H1 (cell line): ENCODE measurements at regions of chr7 and their contacts with region 1.

Region 1: DNA sequence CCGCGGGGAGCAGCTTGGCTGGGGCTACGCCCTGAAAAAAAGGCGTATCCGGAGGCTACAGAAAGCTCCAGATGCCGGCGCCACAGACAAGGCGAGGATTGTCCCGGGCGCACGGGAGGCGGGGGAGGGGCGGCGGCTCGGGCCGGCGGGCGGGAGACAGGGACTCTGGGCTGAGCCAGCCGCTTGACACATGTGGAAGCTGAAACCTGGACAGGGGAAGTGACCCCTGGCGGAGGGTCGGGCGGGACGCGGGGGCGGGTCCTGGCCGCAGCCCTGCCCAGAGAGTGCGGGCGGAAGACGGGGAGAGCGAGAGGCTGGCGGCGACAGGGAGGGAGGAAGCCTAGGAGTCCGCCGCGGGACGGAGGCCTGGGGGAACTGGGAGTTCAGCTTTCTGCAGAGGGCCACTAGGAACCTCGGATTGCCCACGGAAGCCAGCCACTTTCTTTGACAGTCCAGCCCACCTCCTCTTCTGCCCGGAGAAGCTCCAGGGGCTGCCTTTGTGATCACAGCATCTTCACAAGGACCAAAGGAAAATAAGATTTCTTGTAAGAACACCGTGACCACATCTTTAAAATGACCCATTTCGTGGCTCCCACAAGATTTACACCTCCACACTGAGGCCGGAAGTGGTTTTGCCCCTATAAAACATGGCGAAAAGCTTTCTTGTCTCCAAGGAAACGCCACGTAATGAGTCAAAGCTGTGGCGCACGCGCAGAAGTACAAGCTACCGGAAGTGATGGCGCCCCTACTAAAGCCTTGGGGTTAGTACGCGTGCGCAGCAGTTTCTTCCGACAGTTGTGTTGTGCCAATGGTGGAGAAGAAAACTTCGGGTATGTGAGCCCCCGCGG is at the starts of genes PLOD3 and ZNHIT1:
- DNase-seq: peak; percentile 83 to 95
- H3K4me3 ChIP-seq: peak within 1 kb of the TSS; percentile 74 to 83 (median 78)
- H3K27ac ChIP-seq: peak within 1 kb of the TSS; percentile 37; the same call in 1 of the 2 replicates
- H3K4me1 ChIP-seq: peaks cover 0 to 13% (median 7%) of the 10 kb centered on the region in 4 experiments; a peak in 5 of 7 replicates
- H3K27me3 ChIP-seq: no peaks in the 10 kb centered on the region
- CTCF ChIP-seq: peak; percentile 27 to 34 (median 28)
- EP300 ChIP-seq: no peak
- POLR2A ChIP-seq: peak in 1 of 2 experiments; percentile 57; a peak in 2 of 3 replicates
- RAD21 ChIP-seq: peak in 1 of 2 experiments; percentile 28; a peak in 3 of 4 replicates
- total RNA-seq, gene PLOD3: 43.1 and 47.2 TPM in 2 replicates
- total RNA-seq, gene ZNHIT1: 59.9 and 61.7 TPM in 2 replicates

Region 2: GRCh38 chr7:101195884-101196283 is 21.7 kb before region 1 on chr7:
- CTCF ChIA-PET with region 1: interaction called, 54 read pairs
- POLR2A ChIA-PET with region 1: interaction called, 6 read pairs
- DNase-seq: no peak
- H3K4me3 ChIP-seq: no peak overlapping the region
- H3K27ac ChIP-seq: no peak overlapping the region
- H3K4me1 ChIP-seq: peaks cover 0 to 11% (median 7%) of the 10 kb centered on the region in 4 experiments; a peak in 6 of 7 replicates
- H3K27me3 ChIP-seq: peaks cover 0 to 2% (median 0%) of the 10 kb centered on the region in 4 experiments; a peak in 1 of 7 replicates
- CTCF ChIP-seq: no peak
- EP300 ChIP-seq: no peak
- POLR2A ChIP-seq: no peak
- RAD21 ChIP-seq: no peak

Region 3: DNA sequence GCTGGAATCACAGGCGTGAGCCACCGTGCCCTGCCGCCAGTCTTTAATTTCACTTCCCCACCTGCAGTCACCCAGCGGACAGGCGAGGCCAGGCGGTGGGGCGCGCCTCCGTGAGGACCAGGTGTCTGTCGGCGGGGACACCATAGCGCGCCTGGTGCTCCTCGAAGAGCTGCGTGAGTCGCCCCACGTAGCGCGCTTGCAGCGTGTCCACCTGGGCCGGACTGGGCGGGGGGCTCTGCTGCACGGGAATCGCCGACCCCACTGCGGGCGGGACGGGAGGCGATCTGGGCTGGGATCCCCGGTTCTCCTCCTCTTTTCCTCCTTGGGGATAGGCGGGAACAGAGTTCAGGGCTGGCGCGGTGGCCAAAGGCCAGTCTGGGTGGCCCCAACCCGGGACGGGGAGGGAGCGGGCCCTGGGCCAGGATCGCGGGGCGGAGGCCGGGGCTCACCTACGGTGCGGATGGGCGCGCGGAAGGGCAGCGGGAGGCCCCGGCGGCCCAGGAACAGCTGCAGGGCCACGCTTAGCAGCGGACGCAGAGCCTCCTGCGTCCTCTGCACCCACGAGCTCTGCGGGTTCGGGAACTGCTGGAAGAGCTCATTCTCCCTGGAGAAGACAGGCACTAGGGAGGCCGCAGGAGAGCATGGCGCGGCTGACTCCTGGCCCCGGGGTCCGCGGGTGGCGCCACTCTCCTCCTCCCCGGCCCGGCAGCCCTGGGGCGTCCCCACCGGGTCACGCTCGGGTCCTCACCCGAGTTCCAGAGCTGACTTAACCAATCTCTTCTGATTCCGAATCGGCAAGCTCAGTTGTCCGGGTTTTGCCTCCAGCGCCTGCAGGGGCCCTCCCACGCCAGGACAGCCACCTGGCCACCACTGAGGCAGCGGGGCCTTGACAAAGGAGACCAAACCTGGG is 15.7 kb before region 1 on chr7:
- CTCF ChIA-PET with region 1: interaction called, 12 read pairs
- POLR2A ChIA-PET with region 1: interaction called, 17 read pairs
- DNase-seq: peak in 1 of 2 experiments; percentile 78
- H3K4me3 ChIP-seq: peak overlapping the region; percentile 37 to 60 (median 47)
- H3K27ac ChIP-seq: no peak overlapping the region
- H3K4me1 ChIP-seq: peaks cover 5 to 21% (median 14%) of the 10 kb centered on the region in 4 experiments
- H3K27me3 ChIP-seq: peaks cover 0 to 16% (median 9%) of the 10 kb centered on the region in 4 experiments; a peak in 5 of 7 replicates
- CTCF ChIP-seq: no peak
- EP300 ChIP-seq: no peak
- POLR2A ChIP-seq: no peak; a peak in 1 of 3 replicates
- RAD21 ChIP-seq: no peak

Region 4: DNA sequence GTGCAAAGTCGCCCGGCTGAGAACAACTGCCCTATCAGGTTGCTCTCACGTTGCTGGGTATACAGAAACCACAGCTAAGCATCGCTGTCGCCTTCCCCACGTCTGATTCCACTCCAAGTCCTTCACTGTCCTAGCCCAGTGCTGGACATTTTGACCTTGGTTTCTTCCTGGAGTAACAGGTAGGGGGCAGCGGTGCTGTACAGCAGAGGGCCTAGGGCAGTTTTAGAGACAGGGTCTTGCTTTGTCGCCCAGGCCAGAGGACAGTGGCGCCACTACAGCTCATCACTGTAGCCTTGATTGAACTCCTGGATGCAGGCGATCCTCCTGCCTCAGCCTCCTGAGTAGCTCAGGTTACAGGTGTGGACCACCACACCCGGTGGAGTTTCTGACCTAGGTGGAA is 17.4 kb after region 1 on chr7:
- CTCF ChIA-PET with region 1: interaction called, 33 read pairs
- POLR2A ChIA-PET with region 1: interaction called, 15 read pairs
- DNase-seq: peak in 1 of 2 experiments; percentile 63
- H3K4me3 ChIP-seq: no peak overlapping the region
- H3K27ac ChIP-seq: no peak overlapping the region
- H3K4me1 ChIP-seq: peaks cover 0 to 24% (median 12%) of the 10 kb centered on the region in 4 experiments; a peak in 6 of 7 replicates
- H3K27me3 ChIP-seq: no peaks in the 10 kb centered on the region
- CTCF ChIP-seq: peak in 2 of 3 experiments; percentile 73; a peak in 3 of 4 replicates
- EP300 ChIP-seq: no peak
- POLR2A ChIP-seq: no peak
- RAD21 ChIP-seq: peak; percentile 69 to 78

Region 5: DNA sequence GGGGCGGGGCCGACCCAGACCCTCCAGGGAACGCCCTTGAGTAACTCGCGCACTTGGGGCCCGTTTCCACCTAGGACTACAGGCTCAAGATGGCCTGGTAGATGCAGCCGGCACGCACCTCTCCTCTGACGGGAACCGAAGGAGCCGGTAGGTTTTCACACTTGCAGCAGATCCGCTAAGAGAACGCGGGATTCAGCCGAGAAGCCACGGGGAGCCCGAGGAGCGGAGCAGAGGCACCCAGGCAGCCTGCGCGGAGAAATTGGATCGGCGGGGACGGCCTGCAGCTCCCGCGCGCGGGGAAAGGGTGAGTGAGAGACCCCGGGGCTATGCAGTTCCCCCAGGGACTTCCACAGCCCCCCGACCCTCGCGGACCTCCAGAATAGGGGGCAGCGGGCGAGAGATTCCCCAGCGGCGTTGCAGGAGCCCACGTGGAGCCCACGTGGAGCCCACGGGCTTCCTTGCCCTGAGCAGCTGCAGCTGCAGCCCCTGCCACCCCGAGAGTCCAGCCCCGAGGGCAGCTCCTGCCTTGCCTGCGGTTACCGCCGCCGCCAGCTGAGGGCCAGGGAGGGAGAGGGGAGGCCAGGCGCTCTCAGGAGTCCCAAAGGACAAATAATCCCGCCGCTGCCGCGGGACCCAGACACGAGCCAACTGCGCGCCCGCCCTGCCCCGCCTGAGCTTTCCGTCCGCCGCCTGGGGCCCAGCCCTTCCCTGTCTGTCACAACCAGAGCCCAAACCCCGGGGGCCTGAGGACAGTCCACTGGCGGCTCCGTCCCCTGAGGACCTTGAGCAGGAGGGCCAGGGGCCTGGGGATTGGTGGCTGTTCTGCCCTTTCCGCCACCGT is 90.9 kb after region 1 on chr7:
- CTCF ChIA-PET with region 1: no interaction called
- POLR2A ChIA-PET with region 1: interaction called, 11 read pairs
- DNase-seq: peak in 1 of 2 experiments; percentile 89
- H3K4me3 ChIP-seq: peak overlapping the region; percentile 80 to 96 (median 86)
- H3K27ac ChIP-seq: peak overlapping the region; percentile 79; the same call in 1 of the 2 replicates
- H3K4me1 ChIP-seq: peaks cover 0 to 6% (median 3%) of the 10 kb centered on the region in 4 experiments; a peak in 2 of 7 replicates
- H3K27me3 ChIP-seq: no peaks in the 10 kb centered on the region
- CTCF ChIP-seq: no peak
- EP300 ChIP-seq: no peak
- POLR2A ChIP-seq: peak; percentile 86 to 90
- RAD21 ChIP-seq: no peak